Heart right ventricle (tissue), 16 donors: ENCODE measurements at regions of chr5 and their contacts with region 1.

Region 1: DNA sequence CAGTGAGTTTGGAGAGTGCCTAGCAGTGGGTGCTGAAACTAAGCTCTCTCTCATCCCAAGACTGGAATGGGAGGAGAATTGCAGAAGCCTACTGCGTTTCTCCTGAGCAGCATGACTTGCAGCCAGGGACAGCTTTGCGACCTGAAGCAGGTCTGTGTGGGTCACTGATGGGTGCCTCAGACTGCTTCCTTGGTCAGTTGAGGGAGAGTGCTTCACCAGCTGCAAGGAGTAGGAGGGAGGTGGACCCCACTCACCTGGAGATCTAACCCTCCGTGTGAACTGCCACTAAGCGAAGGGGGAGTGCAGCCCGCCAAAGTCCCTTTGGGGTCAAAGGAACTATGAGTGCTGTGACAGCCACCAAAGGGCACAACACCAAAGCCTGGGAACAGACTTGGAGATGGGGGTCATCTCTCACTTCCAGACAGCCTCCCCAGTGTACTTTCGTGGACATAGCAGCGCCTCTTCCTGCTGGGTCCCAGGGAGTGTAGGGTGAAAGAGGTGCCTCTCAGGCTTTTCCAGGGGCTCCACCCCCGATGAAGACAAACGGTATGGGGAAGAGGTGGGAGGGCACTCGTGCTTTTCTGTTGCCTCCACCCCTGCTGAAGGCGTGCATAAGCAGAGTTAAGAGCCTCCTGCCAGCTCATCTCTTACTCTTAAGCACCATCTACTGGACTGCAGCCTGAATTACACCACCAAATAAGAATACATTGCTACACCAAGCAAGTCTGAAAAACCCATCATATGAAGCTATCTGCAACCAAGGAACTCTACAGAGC is 34.3 kb upstream of the MACIR start:
- DNase-seq: peak in 1 of 2 donors; percentile 29
- ATAC-seq: peak; percentile 61 to 85 (median 75)
- H3K4me3 ChIP-seq: no peak overlapping the region
- H3K27ac ChIP-seq: no peak overlapping the region
- H3K4me1 ChIP-seq: no peaks in the 10 kb centered on the region
- H3K27me3 ChIP-seq: peaks cover 0 to 5% (median 0%) of the 10 kb centered on the region in 7 donors
- CTCF ChIP-seq: peak; percentile 30 to 69 (median 64)

Region 2: GRCh38 chr5:103295871-103296270 is 71.6 kb after region 1 on chr5:
- intact Hi-C with region 1: loop called in 1 of 10 experiments (anchors 5 kb)
- DNase-seq: no peak
- ATAC-seq: no peak
- H3K4me3 ChIP-seq: no peak overlapping the region
- H3K27ac ChIP-seq: no peak overlapping the region
- H3K4me1 ChIP-seq: peaks cover 0 to 6% (median 0%) of the 10 kb centered on the region in 9 donors
- H3K27me3 ChIP-seq: no peaks in the 10 kb centered on the region
- CTCF ChIP-seq: no peak